CD4-positive, alpha-beta T cell (primary cell): ENCODE measurements at regions of chr6 and their contacts with region 1.

Region 1: DNA sequence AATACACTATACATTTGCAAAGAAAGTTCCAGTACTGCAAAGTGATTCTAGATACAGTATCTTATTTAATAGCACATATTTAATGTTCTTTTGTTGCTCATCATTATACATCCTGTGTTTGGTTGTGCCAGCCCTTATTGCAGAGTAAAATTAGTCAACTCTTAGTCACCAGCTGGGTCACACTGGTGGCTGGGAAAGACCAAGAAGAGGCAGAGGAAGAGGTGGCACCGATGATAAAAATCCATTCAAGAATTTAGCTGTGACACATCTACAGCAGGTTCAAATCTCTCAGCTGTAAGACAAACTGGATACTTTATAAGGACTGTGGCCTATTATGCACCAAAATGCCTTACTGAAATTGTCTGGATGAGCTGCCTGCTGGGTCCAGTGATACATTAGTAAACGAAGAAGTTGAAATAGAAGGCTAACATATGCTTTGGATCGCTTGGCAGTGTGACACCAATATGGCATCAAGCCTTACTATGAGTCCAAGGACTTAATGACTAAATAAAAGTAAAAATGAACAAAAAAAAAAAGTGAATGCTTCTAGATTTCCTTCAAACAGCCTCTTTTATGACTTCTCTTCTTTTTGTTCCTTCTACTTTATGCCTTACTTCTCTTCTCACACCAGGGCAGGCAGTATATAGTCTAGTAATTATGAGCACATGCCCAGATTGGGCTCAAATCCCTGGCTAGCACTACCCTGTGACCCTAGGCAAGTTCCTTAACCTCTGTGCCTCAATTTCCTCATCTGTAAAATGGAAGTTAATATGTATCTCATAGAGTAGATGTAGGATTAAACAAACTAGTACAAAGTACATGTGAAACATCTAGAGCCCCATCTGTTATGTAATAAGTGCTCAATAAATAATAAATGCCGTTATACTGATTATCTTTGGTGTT is 29.4 kb upstream of the RNF8 start:
- DNase-seq: peak in 2 of 14 experiments; percentile 7 to 8
- ATAC-seq: no peak
- H3K4me3 ChIP-seq: no peak overlapping the region
- H3K4me3 Mint-ChIP-seq: no peak overlapping the region
- H3K27ac ChIP-seq: no peak overlapping the region
- H3K27ac Mint-ChIP-seq: peak overlapping the region; percentile 16
- H3K4me1 ChIP-seq: no peaks in the 10 kb centered on the region
- H3K4me1 Mint-ChIP-seq: no peaks in the 10 kb centered on the region
- H3K27me3 ChIP-seq: no peaks in the 10 kb centered on the region
- H3K27me3 Mint-ChIP-seq: no peaks in the 10 kb centered on the region
- CTCF ChIP-seq: no peak

Region 2: GRCh38 chr6:37418722-37419121 is 94.3 kb after region 1 on chr6:
- CTCF ChIA-PET with region 1: no interaction called
- POLR2A ChIA-PET with region 1: no interaction called
- intact Hi-C with region 1: no loop called
- DNase-seq: no peak
- ATAC-seq: no peak
- H3K4me3 ChIP-seq: no peak overlapping the region
- H3K4me3 Mint-ChIP-seq: no peak overlapping the region
- H3K27ac ChIP-seq: no peak overlapping the region
- H3K27ac Mint-ChIP-seq: no peak overlapping the region
- H3K4me1 ChIP-seq: no peaks in the 10 kb centered on the region
- H3K4me1 Mint-ChIP-seq: no peaks in the 10 kb centered on the region
- H3K27me3 ChIP-seq: peaks cover 0 to 3% of the 10 kb centered on the region in 2 experiments
- H3K27me3 Mint-ChIP-seq: no peaks in the 10 kb centered on the region
- CTCF ChIP-seq: no peak

Region 3: GRCh38 chr6:37483917-37484785 is 159.8 kb after region 1 on chr6:
- CTCF ChIA-PET with region 1: no interaction called
- POLR2A ChIA-PET with region 1: no interaction called
- intact Hi-C with region 1: loop called in 1 of 2 experiments (anchors 2 kb)
- DNase-seq: peak; percentile 62 to 89 (median 76)
- ATAC-seq: peak; percentile 65
- H3K4me3 ChIP-seq: no peak overlapping the region
- H3K4me3 Mint-ChIP-seq: no peak overlapping the region
- H3K27ac ChIP-seq: peak overlapping the region in 1 of 2 donors; percentile 50
- H3K27ac Mint-ChIP-seq: no peak overlapping the region
- H3K4me1 ChIP-seq: peaks cover 40% of the 10 kb centered on the region
- H3K4me1 Mint-ChIP-seq: peaks cover 14% of the 10 kb centered on the region
- H3K27me3 ChIP-seq: no peaks in the 10 kb centered on the region
- H3K27me3 Mint-ChIP-seq: no peaks in the 10 kb centered on the region
- CTCF ChIP-seq: peak; percentile 84